OCI-LY7 (cell line): ENCODE measurements at regions of chrX and their contacts with region 1.

Region 1: DNA sequence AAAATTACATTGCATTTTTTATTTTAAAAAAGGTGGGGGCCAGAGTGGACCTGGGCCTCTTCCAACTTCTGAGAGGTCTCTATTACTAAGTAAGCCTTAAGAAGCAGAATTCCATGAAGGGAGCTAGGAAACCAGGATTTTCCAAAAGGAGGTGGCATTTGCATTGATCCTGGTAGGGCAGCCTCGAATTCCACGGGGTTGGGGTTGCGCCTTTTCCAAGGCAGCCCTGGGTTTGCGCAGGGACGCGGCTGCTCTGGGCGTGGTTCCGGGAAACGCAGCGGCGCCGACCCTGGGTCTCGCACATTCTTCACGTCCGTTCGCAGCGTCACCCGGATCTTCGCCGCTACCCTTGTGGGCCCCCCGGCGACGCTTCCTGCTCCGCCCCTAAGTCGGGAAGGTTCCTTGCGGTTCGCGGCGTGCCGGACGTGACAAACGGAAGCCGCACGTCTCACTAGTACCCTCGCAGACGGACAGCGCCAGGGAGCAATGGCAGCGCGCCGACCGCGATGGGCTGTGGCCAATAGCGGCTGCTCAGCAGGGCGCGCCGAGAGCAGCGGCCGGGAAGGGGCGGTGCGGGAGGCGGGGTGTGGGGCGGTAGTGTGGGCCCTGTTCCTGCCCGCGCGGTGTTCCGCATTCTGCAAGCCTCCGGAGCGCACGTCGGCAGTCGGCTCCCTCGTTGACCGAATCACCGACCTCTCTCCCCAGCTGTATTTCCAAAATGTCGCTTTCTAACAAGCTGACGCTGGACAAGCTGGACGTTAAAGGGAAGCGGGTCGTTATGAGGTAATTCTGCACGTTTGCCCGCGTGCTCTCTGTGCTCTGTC is at the start of gene PGK1:
- DNase-seq: peak; percentile 95
- H3K4me3 ChIP-seq: peak within 1 kb of the TSS; percentile 100
- H3K27ac ChIP-seq: peak within 1 kb of the TSS; percentile 82
- H3K4me1 ChIP-seq: peaks cover 50% of the 10 kb centered on the region
- CTCF ChIP-seq: no peak
- total RNA-seq, gene PGK1: 164 and 179 TPM in 2 replicates

Region 2: DNA sequence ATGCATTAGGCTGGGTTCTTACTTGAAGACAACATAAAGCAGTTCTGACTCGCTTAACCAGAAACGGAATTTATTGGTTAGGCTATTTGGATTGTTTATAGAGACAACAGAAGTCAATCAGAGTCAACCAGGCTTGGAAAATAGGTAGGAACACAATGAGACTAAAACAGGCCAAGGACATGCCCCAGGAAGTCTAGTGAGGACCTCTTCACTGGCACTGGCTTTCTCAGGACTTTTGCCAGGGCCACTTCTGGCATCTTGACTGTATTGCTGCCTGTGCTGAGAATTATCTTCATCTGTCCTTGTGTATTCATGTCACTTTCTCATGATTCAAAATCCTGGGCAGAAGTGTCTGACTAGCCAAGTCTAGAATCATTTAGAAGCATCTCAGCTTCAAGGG is 154.0 kb before region 1 on chrX:
- CTCF ChIA-PET with region 1: no interaction called
- POLR2A ChIA-PET with region 1: no interaction called
- intact Hi-C with region 1: no loop called
- DNase-seq: no peak
- H3K4me3 ChIP-seq: no peak overlapping the region
- H3K27ac ChIP-seq: no peak overlapping the region
- H3K4me1 ChIP-seq: no peaks in the 10 kb centered on the region
- CTCF ChIP-seq: no peak

Region 3: DNA sequence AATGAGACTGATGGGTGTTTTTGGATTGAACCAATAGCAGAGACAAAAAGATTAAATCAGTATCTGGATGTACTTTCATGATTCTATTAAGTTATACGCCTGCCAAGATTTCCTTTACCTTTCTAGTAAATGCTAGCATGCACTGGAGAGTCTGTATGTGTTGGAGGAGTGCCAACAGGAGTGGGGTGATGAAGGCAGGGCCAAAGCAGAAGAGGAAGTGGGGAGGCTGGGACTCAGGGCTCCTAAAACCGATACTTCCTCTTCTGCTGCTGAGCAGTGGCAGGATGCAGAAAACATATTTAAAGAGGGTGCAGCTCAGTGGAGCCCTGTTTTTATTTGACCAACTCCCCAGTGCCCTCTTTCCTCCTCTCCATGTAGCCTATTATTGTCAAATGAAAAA is 218.0 kb after region 1 on chrX:
- CTCF ChIA-PET with region 1: no interaction called
- POLR2A ChIA-PET with region 1: no interaction called
- intact Hi-C with region 1: loop called (anchors 10 kb)
- DNase-seq: peak; percentile 75
- H3K4me3 ChIP-seq: no peak overlapping the region
- H3K27ac ChIP-seq: no peak overlapping the region
- H3K4me1 ChIP-seq: peaks cover 26% of the 10 kb centered on the region
- CTCF ChIP-seq: no peak

Region 4: DNA sequence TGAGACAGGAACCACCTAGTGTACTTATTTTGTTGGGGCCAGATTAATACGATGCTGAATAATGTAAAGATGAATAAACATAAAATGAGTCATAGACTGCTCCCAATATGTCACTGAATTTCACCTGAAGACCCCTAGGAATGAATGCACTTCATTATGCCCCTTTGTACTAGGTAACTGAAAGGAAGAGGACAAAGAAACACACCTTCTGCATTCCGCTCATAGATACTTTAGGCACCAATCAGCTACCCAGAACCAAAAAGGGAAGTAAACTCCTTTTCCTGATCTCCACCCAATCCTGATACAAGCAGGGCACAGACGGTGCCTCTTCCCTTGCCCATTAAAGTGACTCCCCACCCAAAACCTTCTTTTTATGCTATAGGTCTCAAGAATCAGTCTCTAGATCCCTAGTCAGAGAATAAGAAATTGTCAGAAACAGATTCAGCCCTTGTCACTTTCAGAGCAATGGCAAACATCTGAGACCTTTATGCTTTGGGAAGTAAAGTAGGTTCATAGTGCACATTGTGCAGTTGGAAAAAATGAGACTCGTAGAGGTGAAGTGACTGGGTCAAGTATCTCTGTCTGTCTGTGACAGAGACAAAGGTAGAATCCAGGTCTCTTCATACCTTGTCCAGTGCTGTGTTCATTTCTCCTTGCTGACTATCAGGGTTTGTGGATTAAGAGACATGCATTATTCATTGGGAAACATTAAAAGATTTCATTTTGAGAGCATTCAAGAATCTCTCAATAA is 1043.0 kb after region 1 on chrX:
- CTCF ChIA-PET with region 1: no interaction called
- POLR2A ChIA-PET with region 1: no interaction called
- intact Hi-C with region 1: loop called (anchors 10 kb)
- DNase-seq: peak; percentile 32
- H3K4me3 ChIP-seq: peak overlapping the region; percentile 73
- H3K27ac ChIP-seq: peak overlapping the region; percentile 77
- H3K4me1 ChIP-seq: peaks cover 48% of the 10 kb centered on the region
- CTCF ChIP-seq: no peak